ENCODE measurements at regions of chr5 and their contacts with region 1.

Region 1: GRCh38 chr5:157253547-157253946 is 12.4 kb upstream of the CYFIP2 start:
- DNase-seq: peak in 1 of 3 donors; percentile 58
- ATAC-seq: peak; percentile 97 to 98 (median 97)
- H3K4me3 ChIP-seq: no peak overlapping the region
- H3K27ac ChIP-seq: no peak overlapping the region
- H3K4me1 ChIP-seq: no peaks in the 10 kb centered on the region
- H3K27me3 ChIP-seq: no peaks in the 10 kb centered on the region
- CTCF ChIP-seq: peak; percentile 80 to 93 (median 90)
- POLR2A ChIP-seq: no peak

Region 2: DNA sequence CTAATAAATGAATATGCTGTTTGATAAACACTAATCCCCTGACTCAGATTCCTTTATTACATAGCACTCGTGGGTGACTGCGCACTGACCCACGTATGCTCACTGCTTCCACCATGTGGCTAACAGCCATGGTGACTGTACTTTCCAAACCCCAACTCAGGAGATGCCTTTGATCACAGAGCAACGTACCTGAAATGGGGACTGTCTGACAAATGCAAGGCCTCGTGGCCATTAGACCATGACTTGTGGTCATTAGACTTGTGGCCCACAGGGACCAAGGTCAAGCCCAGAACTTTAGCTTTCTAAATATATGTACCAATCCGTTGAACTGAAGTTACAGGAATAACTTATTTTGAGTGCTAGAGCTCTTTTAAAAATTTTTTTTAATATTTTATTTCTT is 58.9 kb after region 1 on chr5:
- intact Hi-C with region 1: loop called (anchors 5 kb)
- DNase-seq: peak in 2 of 3 donors; percentile 42 to 59
- ATAC-seq: peak; percentile 91 to 98 (median 96)
- H3K4me3 ChIP-seq: no peak overlapping the region
- H3K27ac ChIP-seq: no peak overlapping the region
- H3K4me1 ChIP-seq: no peaks in the 10 kb centered on the region
- H3K27me3 ChIP-seq: no peaks in the 10 kb centered on the region
- CTCF ChIP-seq: peak; percentile 58 to 83 (median 68)
- POLR2A ChIP-seq: no peak

Region 3: GRCh38 chr5:157431544-157432200 is 178.1 kb after region 1 on chr5:
- intact Hi-C with region 1: no loop called
- DNase-seq: no peak
- ATAC-seq: peak; percentile 88 to 98 (median 93)
- H3K4me3 ChIP-seq: no peak overlapping the region
- H3K27ac ChIP-seq: no peak overlapping the region
- H3K4me1 ChIP-seq: no peaks in the 10 kb centered on the region
- H3K27me3 ChIP-seq: no peaks in the 10 kb centered on the region
- CTCF ChIP-seq: peak; percentile 52 to 70 (median 62)
- POLR2A ChIP-seq: no peak

Region 4: GRCh38 chr5:157502143-157502647 is 248.6 kb after region 1 on chr5:
- intact Hi-C with region 1: no loop called
- DNase-seq: no peak
- ATAC-seq: peak in 3 of 4 donors; percentile 16 to 34 (median 30)
- H3K4me3 ChIP-seq: no peak overlapping the region
- H3K27ac ChIP-seq: no peak overlapping the region
- H3K4me1 ChIP-seq: no peaks in the 10 kb centered on the region
- H3K27me3 ChIP-seq: no peaks in the 10 kb centered on the region
- CTCF ChIP-seq: no peak
- POLR2A ChIP-seq: no peak

Measured in right lobe of liver (tissue), 6 donors.